Activated B cell treated with CpG ODN at 0.5 μM for 24 hours (primary cell): ENCODE measurements at regions of chr12 and their contacts with region 1.

Region 1: GRCh38 chr12:39692258-39692853 is 72.8 kb upstream of the ABCD2 start:
- DNase-seq: no peak
- ATAC-seq: no peak
- H3K4me3 Mint-ChIP-seq: no peak overlapping the region
- H3K27ac Mint-ChIP-seq: no peak overlapping the region
- H3K4me1 Mint-ChIP-seq: no peaks in the 10 kb centered on the region
- H3K27me3 Mint-ChIP-seq: peaks cover 2% of the 10 kb centered on the region
- CTCF ChIP-seq: no peak

Region 2: DNA sequence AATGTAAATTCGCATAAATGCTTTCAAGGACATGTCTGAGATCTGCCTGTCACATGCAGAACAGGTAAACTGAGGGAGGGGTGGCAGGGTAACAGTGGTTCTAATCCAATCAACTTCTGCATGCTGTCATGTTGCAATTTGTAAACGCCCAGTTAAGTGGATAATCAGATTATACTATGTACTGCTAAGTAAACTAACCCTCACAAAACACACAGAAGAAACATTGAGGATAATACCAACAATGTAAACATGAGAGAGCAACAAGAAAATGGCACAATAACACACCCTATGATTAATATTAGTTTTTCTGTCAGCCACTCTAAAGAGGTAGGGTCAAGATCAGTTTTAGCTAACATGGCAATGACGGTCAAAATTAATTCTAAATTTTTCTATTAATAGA is 373.2 kb before region 1 on chr12:
- CTCF ChIA-PET with region 1: interaction called, 4 read pairs
- POLR2A ChIA-PET with region 1: no interaction called
- intact Hi-C with region 1: loop called (anchors 1 kb)
- DNase-seq: no peak
- ATAC-seq: no peak
- H3K4me3 Mint-ChIP-seq: no peak overlapping the region
- H3K27ac Mint-ChIP-seq: no peak overlapping the region
- H3K4me1 Mint-ChIP-seq: no peaks in the 10 kb centered on the region
- H3K27me3 Mint-ChIP-seq: no peaks in the 10 kb centered on the region
- CTCF ChIP-seq: no peak

Region 3: DNA sequence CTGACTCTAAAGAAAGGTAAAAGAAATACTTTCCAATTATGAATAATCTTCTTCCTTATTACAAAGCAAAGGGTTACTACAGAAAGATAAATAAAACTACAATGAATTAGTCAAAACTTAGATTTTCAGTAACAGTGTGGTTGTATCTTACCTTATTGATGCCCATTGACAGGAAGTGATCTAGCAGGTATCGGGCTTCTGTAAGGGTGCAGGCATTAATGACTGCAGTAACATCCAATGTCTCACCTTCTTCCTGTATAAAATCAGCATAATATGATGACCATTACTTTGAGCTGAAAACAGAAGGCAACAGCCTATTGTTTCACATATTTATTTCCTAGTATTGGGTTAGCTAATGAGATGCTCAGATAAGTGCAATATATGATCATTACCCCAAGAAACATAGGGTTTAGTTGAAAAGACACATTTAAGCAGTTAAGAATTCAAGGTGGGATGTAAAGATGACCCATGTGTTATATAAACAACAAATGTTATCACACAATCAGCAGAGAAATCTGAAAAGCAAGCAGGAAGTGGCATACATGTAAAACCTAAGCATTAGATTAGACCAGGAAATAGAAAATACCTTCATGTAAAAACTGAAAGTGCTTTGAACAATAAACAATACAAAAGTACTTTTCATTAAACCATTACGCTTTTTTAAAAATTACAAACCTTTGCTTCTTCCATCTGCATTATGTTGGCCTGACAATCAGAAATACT is 360.7 kb before region 1 on chr12:
- CTCF ChIA-PET with region 1: no interaction called
- POLR2A ChIA-PET with region 1: no interaction called
- intact Hi-C with region 1: no loop called
- DNase-seq: no peak
- ATAC-seq: no peak
- H3K4me3 Mint-ChIP-seq: no peak overlapping the region
- H3K27ac Mint-ChIP-seq: no peak overlapping the region
- H3K4me1 Mint-ChIP-seq: no peaks in the 10 kb centered on the region
- H3K27me3 Mint-ChIP-seq: no peaks in the 10 kb centered on the region
- CTCF ChIP-seq: no peak

Region 4: DNA sequence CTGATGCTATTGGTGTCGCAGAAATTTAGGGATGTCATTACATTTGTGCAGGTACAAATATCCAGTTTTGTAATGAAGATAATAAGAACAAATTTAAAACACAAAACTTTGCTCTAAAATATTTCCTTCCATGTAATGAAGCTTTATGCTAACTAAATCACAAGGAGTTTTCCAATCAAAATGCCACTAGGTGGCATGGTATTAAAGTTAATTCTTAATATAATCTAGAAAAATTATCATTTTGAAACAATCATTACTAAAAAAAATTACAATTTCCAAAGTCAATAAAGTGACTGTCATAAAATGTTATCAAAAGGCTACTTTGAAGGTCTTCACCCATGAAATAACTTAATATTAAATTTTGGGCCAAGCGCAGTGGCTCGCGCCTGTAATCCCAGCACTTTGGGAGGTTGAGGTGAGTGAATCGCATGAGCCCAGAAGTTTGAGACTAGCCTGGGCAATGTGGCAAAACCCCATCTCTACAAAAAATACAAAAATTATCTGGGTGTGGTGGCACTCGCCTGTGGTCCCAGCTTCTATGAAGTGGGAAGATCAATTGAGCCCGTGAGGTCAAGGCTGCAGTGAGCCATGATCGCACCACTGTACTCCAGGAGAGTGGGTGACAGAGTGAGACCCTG is 326.9 kb before region 1 on chr12:
- CTCF ChIA-PET with region 1: no interaction called
- POLR2A ChIA-PET with region 1: no interaction called
- intact Hi-C with region 1: loop called (anchors 2 kb)
- DNase-seq: no peak
- ATAC-seq: no peak
- H3K4me3 Mint-ChIP-seq: no peak overlapping the region
- H3K27ac Mint-ChIP-seq: no peak overlapping the region
- H3K4me1 Mint-ChIP-seq: no peaks in the 10 kb centered on the region
- H3K27me3 Mint-ChIP-seq: no peaks in the 10 kb centered on the region
- CTCF ChIP-seq: no peak

Region 5: GRCh38 chr12:39443081-39443928 is 249.1 kb before region 1 on chr12 and contains the start of gene KIF21A:
- CTCF ChIA-PET with region 1: no interaction called
- POLR2A ChIA-PET with region 1: no interaction called
- intact Hi-C with region 1: loop called (anchors 10 kb)
- DNase-seq: peak; percentile 65
- ATAC-seq: peak; percentile 91
- H3K4me3 Mint-ChIP-seq: peak within 1 kb of the TSS; percentile 82
- H3K27ac Mint-ChIP-seq: peak within 1 kb of the TSS; percentile 61
- H3K4me1 Mint-ChIP-seq: peaks cover 16% of the 10 kb centered on the region
- H3K27me3 Mint-ChIP-seq: peaks cover 31% of the 10 kb centered on the region
- CTCF ChIP-seq: no peak
- total RNA-seq, gene KIF21A: 6.1 and 7.6 TPM in 2 replicates

Region 6: GRCh38 chr12:39553471-39553870 is 138.9 kb before region 1 on chr12:
- CTCF ChIA-PET with region 1: no interaction called
- POLR2A ChIA-PET with region 1: no interaction called
- intact Hi-C with region 1: loop called (anchors 5 kb)
- DNase-seq: no peak
- ATAC-seq: no peak
- H3K4me3 Mint-ChIP-seq: no peak overlapping the region
- H3K27ac Mint-ChIP-seq: no peak overlapping the region
- H3K4me1 Mint-ChIP-seq: no peaks in the 10 kb centered on the region
- H3K27me3 Mint-ChIP-seq: no peaks in the 10 kb centered on the region
- CTCF ChIP-seq: no peak

Region 7: GRCh38 chr12:39587225-39587624 is 105.1 kb before region 1 on chr12:
- CTCF ChIA-PET with region 1: interaction called, 23 read pairs
- POLR2A ChIA-PET with region 1: no interaction called
- intact Hi-C with region 1: loop called (anchors 1 kb)
- DNase-seq: no peak
- ATAC-seq: peak; percentile 62
- H3K4me3 Mint-ChIP-seq: no peak overlapping the region
- H3K27ac Mint-ChIP-seq: no peak overlapping the region
- H3K4me1 Mint-ChIP-seq: peaks cover 2% of the 10 kb centered on the region
- H3K27me3 Mint-ChIP-seq: no peaks in the 10 kb centered on the region
- CTCF ChIP-seq: no peak

Region 8: GRCh38 chr12:39671898-39672875 is 20.2 kb before region 1 on chr12:
- CTCF ChIA-PET with region 1: no interaction called
- POLR2A ChIA-PET with region 1: no interaction called
- intact Hi-C with region 1: no loop called
- DNase-seq: no peak
- ATAC-seq: no peak
- H3K4me3 Mint-ChIP-seq: no peak overlapping the region
- H3K27ac Mint-ChIP-seq: no peak overlapping the region
- H3K4me1 Mint-ChIP-seq: no peaks in the 10 kb centered on the region
- H3K27me3 Mint-ChIP-seq: peaks cover 7% of the 10 kb centered on the region
- CTCF ChIP-seq: no peak

Region 9: DNA sequence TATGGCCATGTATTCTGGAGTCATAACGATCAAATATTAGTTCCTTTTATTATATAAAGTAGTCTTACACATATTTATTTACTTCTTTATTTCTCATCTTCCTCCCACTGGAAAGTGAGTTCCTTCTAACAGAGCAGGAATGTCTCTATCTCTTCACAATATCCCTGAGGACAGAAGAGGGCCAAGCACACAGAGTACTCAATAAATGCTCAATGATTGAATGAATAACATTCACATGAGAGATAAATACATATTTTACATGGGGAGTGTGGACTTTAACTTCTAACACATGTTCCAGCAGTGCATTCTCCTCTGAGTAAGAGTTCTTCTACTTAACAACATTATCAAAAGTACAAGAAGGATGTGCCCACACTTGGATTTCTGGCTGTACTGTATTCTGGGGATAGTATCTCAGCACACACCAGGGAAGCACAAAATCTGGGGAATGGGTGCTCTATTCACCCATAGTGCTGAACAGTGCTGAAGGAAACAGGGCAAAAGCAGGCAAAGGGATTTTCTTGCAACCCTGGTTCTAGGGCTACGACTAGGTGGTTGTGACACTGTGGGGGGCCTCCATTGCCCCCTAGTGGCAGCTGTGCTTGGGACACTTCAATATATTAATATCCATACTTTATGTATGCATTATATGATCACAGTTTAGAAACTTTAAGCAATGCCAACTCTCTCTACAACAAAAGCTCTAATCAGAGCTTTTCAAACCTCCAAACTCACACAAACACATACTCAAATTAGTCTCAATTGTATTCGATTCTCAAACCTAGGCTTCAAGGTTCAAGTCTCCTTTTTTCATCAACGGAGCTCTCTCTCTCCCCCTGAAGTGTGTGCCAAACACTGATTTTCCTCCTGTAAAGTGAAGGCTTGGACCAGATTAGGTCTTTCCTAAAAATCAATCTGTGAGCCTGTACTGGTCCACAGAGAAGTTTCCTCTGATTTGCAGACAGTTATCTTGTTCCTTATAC is 298.1 kb after region 1 on chr12:
- CTCF ChIA-PET with region 1: no interaction called
- POLR2A ChIA-PET with region 1: no interaction called
- intact Hi-C with region 1: loop called (anchors 10 kb)
- DNase-seq: peak; percentile 33
- ATAC-seq: peak; percentile 84
- H3K4me3 Mint-ChIP-seq: no peak overlapping the region
- H3K27ac Mint-ChIP-seq: no peak overlapping the region
- H3K4me1 Mint-ChIP-seq: peaks cover 4% of the 10 kb centered on the region
- H3K27me3 Mint-ChIP-seq: no peaks in the 10 kb centered on the region
- CTCF ChIP-seq: peak; percentile 17